Common myeloid progenitor, CD34-positive (primary cell): ENCODE measurements at regions of chr10 and their contacts with region 1.

Region 1: DNA sequence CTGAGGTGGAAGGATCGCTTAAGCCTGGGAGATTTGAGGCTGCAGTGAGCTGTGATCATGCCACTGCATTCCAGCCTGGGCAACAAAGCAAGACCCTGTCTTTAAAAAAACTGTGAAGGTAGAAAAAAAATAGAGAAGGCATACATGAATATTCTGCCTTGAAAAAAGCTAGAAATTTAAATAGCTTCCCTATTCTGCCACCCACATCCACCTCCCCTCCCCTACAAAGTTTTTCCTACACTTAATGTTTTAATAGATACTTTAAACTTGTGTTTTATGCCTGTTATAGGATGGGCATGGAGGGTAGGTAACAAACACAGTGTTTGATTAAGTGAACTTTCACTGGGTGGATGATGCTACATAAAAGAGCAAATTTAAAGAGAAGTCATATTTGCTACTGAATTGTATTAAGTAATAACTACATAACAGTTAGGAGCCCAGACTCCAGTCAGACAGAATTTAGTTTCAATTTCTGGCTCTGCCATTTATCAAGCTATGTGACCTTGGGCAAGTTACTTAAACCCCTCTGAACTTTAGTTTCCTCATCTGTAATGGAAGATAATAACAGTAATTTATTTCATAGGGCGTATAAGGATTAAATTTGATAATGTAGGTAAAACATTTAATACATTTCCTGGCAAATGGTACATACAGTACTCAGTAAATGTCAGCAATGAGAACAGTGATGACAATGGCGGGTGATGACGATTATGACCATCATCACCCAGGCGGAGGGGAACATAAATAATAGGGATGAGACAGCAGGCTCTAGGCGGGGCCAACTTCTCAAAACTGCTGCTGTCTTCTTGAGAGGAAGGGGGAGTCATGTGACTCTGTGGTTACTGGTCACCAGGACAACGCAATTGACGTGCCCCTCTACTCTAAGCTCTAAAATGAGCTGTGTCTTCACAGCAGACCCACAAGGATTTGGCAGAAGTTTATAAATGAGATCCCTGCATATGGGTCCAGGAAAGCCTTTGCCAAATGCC is 15.8 kb downstream of the DNMBP start:
- DNase-seq: peak; percentile 94 to 98 (median 98)
- H3K4me3 ChIP-seq: peak overlapping the region in 4 of 7 experiments; percentile 35 to 65 (median 42)
- H3K27ac ChIP-seq: peak overlapping the region; percentile 35 to 78
- H3K4me1 ChIP-seq: peaks cover 13 to 26% (median 19%) of the 10 kb centered on the region in 4 experiments
- H3K27me3 ChIP-seq: no peaks in the 10 kb centered on the region

Region 2: GRCh38 chr10:99698504-99699080 is 295.4 kb before region 1 on chr10:
- CTCF ChIA-PET with region 1: no interaction called
- POLR2A ChIA-PET with region 1: no interaction called
- DNase-seq: peak; percentile 13 to 36 (median 31)
- H3K4me3 ChIP-seq: no peak overlapping the region
- H3K27ac ChIP-seq: no peak overlapping the region
- H3K4me1 ChIP-seq: no peaks in the 10 kb centered on the region
- H3K27me3 ChIP-seq: no peaks in the 10 kb centered on the region

Region 3: GRCh38 chr10:99880080-99880835 is 113.7 kb before region 1 on chr10:
- CTCF ChIA-PET with region 1: no interaction called
- POLR2A ChIA-PET with region 1: no interaction called
- DNase-seq: no peak
- H3K4me3 ChIP-seq: no peak overlapping the region
- H3K27ac ChIP-seq: no peak overlapping the region
- H3K4me1 ChIP-seq: no peaks in the 10 kb centered on the region
- H3K27me3 ChIP-seq: peaks cover 0 to 2% (median 0%) of the 10 kb centered on the region in 5 experiments

Region 4: DNA sequence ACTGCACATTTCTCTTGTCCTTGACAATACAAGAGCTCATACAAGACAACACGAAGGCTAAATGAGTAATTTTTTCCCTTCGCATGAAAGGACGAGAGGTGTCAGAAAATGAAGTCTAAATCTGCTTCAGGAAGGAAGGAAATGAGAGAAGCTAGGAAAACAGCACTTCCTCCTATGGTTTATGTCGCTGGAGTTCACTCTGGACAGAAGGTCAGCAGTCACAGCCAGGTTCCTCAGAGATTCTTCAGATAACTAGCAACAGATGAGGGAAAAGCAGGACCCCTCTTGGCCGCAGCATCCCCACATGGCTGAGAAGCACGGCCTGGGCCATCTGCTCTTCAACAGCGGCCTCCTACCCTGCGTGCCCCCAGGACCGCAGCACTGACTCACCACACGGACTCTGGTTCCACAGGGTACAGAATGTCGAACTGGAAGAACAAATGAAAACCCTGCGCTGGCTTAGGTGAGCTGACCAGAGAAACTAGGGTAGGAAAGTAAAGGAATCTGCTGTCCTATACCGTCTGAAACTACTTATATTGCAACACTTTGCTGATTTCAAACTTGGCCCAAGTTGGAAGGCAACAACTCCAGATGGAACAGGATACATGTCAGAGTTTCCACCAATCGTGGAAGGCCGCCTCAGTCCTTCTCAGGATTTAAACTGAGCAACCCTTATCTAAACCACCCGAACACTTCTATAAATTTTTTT is 10.6 kb before region 1 on chr10:
- CTCF ChIA-PET with region 1: interaction called, 10 read pairs
- POLR2A ChIA-PET with region 1: interaction called, 5 read pairs
- DNase-seq: no peak
- H3K4me3 ChIP-seq: no peak overlapping the region
- H3K27ac ChIP-seq: no peak overlapping the region
- H3K4me1 ChIP-seq: peaks cover 0 to 16% (median 4%) of the 10 kb centered on the region in 4 experiments
- H3K27me3 ChIP-seq: no peaks in the 10 kb centered on the region